GM10248 (cell line): ENCODE measurements at regions of chr16 and their contacts with region 1.

Region 1: GRCh38 chr16:11105038-11105903 is 150.7 kb downstream of the SOCS1 start:
- DNase-seq: peak; percentile 65
- CTCF ChIP-seq: no peak

Region 2: DNA sequence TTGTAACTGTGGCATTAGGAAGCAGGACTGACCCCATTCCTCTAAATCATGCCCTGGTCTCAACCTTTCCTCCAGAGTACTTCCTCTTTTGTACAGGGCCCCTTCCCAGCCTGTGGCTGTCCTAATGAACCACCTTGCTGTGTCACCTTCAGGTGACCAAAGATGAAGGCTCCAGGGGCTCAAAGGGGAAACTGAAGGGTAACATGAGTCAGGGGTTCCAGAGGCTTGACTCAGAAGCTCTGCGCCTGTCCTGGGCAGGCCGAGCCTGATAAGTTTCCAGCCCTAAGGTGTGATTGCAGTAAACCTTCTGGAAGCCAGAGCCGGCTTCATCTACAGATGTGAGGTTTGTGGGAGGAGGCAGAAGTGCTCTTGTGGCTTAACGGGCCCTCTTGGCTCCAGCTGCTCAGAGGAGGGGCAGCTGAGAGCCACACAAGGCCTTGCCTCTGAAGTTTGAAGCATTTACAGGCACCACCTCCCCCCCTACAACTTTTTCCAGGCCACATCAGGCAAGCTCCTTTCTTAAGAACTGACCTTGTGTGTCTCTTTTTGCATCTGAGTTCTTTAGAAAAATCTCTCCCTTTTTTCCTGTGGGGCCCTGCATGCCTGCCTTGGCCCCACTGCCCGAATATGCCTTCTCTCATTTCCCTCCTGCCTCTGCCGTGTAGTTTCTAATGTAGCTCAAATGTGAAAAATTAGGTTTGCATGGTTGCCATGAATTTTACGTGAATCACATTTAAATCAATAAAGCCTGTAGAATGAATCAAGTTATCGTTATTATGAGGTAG is 11.0 kb before region 1 on chr16:
- CTCF ChIA-PET with region 1: interaction called, 6 read pairs
- POLR2A ChIA-PET with region 1: interaction called, 13 read pairs
- DNase-seq: peak; percentile 73
- CTCF ChIP-seq: no peak